Right cardiac atrium (tissue), 5 donors: ENCODE measurements at regions of chr22 and their contacts with region 1.

Region 1: GRCh38 chr22:39520054-39520891 is at the start of gene ATF4:
- DNase-seq: peak; percentile 98 to 99 (median 98)
- ATAC-seq: peak; percentile 88
- H3K4me3 ChIP-seq: peak within 1 kb of the TSS; percentile 91
- H3K27ac ChIP-seq: peak within 1 kb of the TSS; percentile 97
- H3K4me1 ChIP-seq: peaks cover 6% of the 10 kb centered on the region
- H3K27me3 ChIP-seq: no peaks in the 10 kb centered on the region
- total RNA-seq, gene ATF4: 156 to 254 (median 177) TPM

Region 2: DNA sequence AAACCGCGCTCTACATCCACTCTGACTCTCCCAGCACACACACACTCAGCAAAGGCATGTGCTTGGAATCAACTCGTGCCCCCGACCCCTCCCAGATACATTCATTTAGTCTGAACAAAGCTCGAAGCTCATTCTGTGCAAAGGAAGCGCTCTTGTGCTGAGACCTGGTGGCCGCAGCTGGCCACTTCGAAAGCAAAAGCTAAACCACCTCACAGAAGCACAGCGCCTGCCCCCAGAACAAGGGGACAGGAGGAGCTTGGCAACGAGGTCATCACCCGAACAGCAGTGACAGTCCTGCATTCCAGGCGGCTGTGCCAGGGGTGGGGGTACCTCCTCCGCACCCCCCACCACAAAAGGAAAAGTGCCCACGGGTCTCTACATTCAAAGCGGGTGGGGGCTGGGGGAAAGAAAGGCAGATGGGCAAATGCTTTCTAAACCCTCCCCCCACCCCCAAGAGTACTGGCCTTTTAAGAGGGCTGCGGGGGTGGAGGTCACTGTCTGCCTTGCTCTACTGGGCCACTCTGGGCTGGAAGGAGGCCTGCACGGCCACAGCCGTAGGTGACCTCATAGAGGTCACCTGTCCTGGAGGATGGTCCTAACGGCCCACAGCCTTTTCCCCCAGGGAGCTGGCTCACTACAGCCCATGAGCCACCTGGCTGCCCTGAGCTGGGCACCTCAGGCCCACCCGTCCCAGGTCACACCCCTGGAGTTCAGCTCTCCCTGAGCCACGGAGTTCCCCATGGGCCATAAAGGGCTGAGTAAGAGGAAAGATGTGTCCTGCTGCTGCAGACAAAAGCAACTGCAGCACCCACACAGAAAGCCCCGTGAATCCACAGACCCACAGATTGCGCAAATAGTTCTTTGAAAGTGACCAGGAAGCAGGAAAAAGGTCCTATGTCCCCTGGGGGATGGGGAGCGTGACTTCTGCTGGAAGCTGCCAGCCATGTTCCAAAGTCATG is 389.1 kb before region 1 on chr22:
- intact Hi-C with region 1: no loop called
- DNase-seq: no peak
- ATAC-seq: no peak
- H3K4me3 ChIP-seq: no peak overlapping the region
- H3K27ac ChIP-seq: no peak overlapping the region
- H3K4me1 ChIP-seq: peaks cover 5% of the 10 kb centered on the region
- H3K27me3 ChIP-seq: no peaks in the 10 kb centered on the region

Region 3: DNA sequence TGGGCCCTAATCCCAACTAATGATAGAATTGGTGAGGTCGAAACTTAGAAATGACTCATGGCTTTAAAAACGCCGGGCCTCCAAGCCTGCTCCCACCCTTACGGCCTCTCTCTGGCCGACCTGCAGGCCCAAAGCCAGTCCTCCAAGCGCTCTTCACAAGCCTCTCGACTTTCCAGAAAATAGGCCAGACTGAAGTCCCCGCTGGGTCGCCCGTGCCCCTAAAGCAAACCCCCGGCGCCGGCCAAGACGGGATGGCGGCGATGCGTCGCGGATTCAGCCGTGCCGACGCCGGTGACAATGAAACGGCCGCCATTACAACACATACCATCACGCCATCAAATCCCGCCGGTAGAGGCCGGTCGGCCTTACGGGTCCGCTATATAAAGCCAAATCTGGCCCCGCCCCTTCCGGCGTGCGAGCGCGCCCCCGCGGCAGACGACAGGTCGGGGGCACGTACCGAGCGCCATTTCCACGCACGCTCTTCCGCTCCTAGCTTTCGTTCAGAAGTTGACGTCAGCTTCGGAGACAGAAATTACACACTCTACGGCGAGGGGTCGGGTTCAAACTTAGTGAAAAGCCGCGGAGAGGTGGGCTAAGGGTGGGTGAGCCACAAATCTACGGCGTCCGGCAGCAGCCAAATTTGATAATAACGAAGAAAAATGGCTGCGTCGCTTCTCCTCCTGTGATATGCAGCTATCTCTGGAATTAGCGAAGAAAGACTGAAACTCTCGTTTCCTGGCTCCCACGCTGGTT is 200.8 kb before region 1 on chr22 and contains the start of gene RPL3:
- intact Hi-C with region 1: loop called in 2 of 4 experiments (anchors 5 kb)
- DNase-seq: peak; percentile 96 to 99 (median 99)
- ATAC-seq: peak; percentile 91 to 92
- H3K4me3 ChIP-seq: peak within 1 kb of the TSS; percentile 79
- H3K27ac ChIP-seq: peak within 1 kb of the TSS; percentile 99
- H3K4me1 ChIP-seq: peaks cover 11% of the 10 kb centered on the region
- H3K27me3 ChIP-seq: no peaks in the 10 kb centered on the region
- total RNA-seq, gene RPL3: 948 to 1,416 (median 984) TPM

Region 4: GRCh38 chr22:39343259-39344048 is 176.8 kb before region 1 on chr22:
- intact Hi-C with region 1: loop called in 1 of 4 experiments (anchors 10 kb)
- DNase-seq: peak in 1 of 3 donors; percentile 78
- ATAC-seq: peak; percentile 71 to 78
- H3K4me3 ChIP-seq: no peak overlapping the region
- H3K27ac ChIP-seq: no peak overlapping the region
- H3K4me1 ChIP-seq: no peaks in the 10 kb centered on the region
- H3K27me3 ChIP-seq: no peaks in the 10 kb centered on the region

Region 5: DNA sequence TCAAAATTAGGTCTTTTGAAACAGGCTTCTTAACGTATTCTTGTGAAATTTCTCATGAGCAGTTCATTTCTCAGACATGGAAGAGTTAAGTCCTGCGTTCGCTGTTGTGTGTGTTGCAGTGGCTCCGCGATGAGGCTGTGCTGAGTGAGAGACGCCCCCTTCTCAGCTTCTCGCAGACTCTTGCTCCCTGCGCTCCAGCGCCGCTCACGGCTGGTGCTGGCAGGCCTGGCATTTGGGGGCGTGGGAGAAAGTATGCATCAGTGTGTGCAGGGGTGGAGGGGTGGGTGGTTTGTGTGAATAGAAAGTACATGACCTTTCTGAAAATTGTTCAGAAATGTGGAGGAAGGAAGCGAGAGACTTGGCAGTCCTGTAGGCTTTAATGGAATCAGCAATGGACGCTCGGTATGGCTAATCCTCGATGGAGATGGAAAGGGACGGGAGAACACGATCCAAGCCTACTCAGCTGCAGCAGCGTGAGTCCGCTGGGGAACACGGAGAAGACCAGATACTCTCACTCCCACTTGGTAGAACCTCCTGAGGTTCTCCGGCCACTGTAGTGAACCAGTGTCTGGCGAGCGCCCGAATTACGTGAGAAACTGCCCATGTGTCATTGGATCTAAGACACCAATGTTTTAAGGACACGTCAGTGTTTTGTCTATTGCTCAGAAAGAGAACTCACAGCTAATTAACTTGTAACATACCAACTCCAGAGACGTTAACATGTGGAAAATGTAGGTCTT is 114.8 kb before region 1 on chr22:
- intact Hi-C with region 1: loop called in 3 of 4 experiments (anchors 10 kb)
- DNase-seq: peak; percentile 51 to 76 (median 73)
- ATAC-seq: peak; percentile 70 to 71
- H3K4me3 ChIP-seq: no peak overlapping the region
- H3K27ac ChIP-seq: no peak overlapping the region
- H3K4me1 ChIP-seq: no peaks in the 10 kb centered on the region
- H3K27me3 ChIP-seq: no peaks in the 10 kb centered on the region

Region 6: DNA sequence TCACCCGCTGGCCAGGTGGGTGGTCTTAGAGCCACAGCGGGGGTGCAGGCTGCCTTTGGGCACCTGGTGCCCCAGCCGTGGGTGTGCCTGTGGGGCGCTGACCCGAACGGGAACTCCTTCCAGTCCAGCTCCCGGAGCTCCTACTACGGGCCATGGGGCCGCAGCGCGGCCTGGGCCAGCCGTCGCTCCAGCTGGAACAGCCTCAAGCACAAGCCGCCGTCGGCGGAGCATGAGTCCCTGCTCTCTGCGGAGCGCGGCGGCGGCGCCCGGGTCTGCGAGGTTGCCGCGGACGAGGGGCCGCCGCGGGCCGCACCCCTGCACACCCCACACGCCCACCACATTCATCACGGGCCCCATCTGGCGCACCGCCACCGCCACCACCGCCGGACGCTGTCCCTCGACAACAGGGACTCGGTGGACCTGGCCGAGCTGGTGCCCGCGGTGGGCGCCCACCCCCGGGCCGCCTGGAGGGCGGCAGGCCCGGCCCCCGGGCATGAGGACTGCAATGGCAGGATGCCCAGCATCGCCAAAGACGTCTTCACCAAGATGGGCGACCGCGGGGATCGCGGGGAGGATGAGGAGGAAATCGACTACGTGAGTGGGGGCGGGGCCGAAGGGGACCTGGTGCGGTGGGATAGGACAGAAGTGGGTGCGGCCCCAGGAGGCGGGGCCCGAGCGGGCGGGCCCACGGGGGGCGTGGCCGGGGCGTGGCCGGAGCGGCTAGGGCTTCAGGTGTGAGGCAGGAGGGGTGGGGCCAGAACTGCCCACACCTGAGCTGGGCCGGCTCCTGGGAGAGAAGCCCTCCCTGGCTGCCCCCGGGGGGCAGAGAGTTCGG is 141.8 kb after region 1 on chr22:
- intact Hi-C with region 1: no loop called
- DNase-seq: peak in 1 of 3 donors; percentile 55
- ATAC-seq: no peak
- H3K4me3 ChIP-seq: no peak overlapping the region
- H3K27ac ChIP-seq: no peak overlapping the region
- H3K4me1 ChIP-seq: no peaks in the 10 kb centered on the region
- H3K27me3 ChIP-seq: no peaks in the 10 kb centered on the region